ENCODE measurements at regions of chr6 and their contacts with region 1.

Region 1: GRCh38 chr6:139515511-139515910 is 141.1 kb upstream of the CITED2 start:
- DNase-seq: no peak
- ATAC-seq: no peak
- H3K4me3 ChIP-seq: no peak overlapping the region; a peak in 1 of 4 replicates
- H3K27ac ChIP-seq: peak overlapping the region; percentile 30; the same call in 1 of the 2 replicates
- H3K4me1 ChIP-seq: 0 out of 2 replicates have a peak, but pooled peaks cover 3% of the 10 kb centered on the region
- H3K27me3 ChIP-seq: no peaks in the 10 kb centered on the region
- CTCF ChIP-seq: no peak

Region 2: GRCh38 chr6:139250296-139251044 is 265.0 kb before region 1 on chr6:
- CTCF ChIA-PET with region 1: no interaction called
- POLR2A ChIA-PET with region 1: no interaction called
- in situ Hi-C with region 1: no loop called
- intact Hi-C with region 1: no loop called
- DNase-seq: no peak
- ATAC-seq: peak; percentile 91
- H3K4me3 ChIP-seq: no peak overlapping the region
- H3K27ac ChIP-seq: no peak overlapping the region
- H3K4me1 ChIP-seq: no peaks in the 10 kb centered on the region
- H3K27me3 ChIP-seq: no peaks in the 10 kb centered on the region
- CTCF ChIP-seq: peak; percentile 84

Region 3: GRCh38 chr6:139531109-139531790 is 15.7 kb after region 1 on chr6:
- CTCF ChIA-PET with region 1: no interaction called
- POLR2A ChIA-PET with region 1: no interaction called
- in situ Hi-C with region 1: no loop called
- intact Hi-C with region 1: no loop called
- DNase-seq: no peak
- ATAC-seq: no peak
- H3K4me3 ChIP-seq: no peak overlapping the region
- H3K27ac ChIP-seq: peak overlapping the region; percentile 84
- H3K4me1 ChIP-seq: peaks cover 30% of the 10 kb centered on the region
- H3K27me3 ChIP-seq: no peaks in the 10 kb centered on the region
- CTCF ChIP-seq: no peak

Region 4: DNA sequence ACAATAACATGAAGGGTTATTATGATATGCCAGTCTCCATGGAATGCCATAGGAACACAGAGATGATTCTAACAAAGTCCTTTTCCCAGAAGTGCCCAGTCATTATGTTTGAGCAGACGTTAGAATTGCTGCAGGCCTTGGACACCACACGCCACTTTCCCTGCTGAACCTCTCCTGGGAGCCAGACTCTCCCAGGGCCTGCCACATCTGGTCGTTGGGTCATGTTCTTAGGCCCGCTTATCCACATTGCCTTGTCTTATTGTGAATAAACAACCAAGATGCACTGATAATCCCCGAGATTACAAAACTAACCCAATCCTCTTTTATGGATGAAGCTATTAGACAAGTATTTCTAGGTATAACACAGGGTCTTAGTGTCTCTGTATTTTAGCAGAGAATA is 135.4 kb after region 1 on chr6:
- CTCF ChIA-PET with region 1: no interaction called
- POLR2A ChIA-PET with region 1: interaction called, 13 read pairs
- in situ Hi-C with region 1: no loop called
- intact Hi-C with region 1: no loop called
- DNase-seq: no peak
- ATAC-seq: no peak
- H3K4me3 ChIP-seq: no peak overlapping the region
- H3K27ac ChIP-seq: peak overlapping the region; percentile 13; the same call in 1 of the 2 replicates
- H3K4me1 ChIP-seq: no peaks in the 10 kb centered on the region
- H3K27me3 ChIP-seq: no peaks in the 10 kb centered on the region
- CTCF ChIP-seq: no peak

Region 5: DNA sequence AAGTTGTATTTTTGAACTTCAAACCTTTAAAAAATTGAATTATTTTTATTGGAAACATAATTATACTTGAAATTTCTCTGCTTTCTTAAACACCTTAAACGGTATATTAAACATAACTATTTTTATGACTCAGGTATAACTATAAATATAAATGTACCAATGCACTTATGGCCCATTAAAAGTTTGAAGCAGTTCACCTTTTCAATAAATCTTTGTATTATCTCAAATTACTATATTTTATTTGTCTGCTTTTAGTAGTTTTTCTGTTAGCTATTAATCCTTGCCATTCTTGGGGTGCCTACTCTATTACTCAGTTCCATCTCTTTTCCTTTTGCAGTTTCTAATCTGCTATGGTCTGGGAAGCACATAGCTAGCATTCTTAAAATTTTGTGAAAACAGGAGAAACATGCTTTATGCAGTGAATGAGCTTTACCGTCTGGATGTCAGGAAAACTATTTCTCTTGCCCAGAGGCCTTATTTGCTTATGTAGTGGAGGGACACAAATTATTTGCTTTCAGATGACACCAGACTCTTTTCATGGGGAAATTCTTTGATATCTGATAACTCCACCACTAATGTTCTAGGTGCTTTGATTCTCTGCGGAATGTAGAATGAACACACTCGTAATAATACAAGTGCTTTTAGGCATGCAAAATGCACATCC is 237.8 kb after region 1 on chr6:
- CTCF ChIA-PET with region 1: no interaction called
- POLR2A ChIA-PET with region 1: no interaction called
- in situ Hi-C with region 1: no loop called
- intact Hi-C with region 1: no loop called
- DNase-seq: no peak
- ATAC-seq: peak; percentile 80
- H3K4me3 ChIP-seq: no peak overlapping the region
- H3K27ac ChIP-seq: peak overlapping the region; percentile 73; the same call in 1 of the 2 replicates
- H3K4me1 ChIP-seq: peaks cover 6% of the 10 kb centered on the region; the same call in 1 of the 2 replicates
- H3K27me3 ChIP-seq: no peaks in the 10 kb centered on the region
- CTCF ChIP-seq: no peak

Measured in Panc1 (cell line).